Left cardiac atrium (tissue), 4 donors: ENCODE measurements at regions of chr13 and their contacts with region 1.

Region 1: DNA sequence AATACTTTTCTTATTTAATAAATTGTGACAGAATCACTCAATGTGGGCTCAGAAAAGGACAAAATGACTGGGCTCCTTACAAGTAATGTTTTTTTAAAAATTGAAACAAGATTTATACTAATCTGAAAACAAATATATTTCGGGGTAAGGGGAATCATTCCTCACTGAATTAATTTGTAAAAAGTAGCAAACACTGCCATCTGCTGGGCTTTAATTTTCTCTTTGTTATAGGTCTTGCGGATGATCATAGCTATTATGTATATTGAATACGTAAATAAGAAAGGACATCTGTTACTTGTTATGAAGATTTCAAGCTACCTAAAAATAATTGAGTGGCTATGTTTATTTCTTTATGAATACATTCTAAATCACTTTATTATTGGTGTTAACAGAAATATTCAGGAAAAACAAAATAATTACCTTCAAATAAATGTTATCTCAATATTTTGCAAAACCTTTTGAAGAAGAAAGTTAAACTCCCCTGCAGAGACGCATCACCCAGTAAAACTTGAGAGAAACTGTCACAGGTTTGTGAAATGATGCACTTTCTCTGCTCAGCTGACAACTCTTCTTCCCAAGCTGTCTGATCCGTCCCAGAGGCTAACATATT is 17.8 kb upstream of the ENOX1 start:
- DNase-seq: no peak
- ATAC-seq: peak; percentile 65 to 78

Region 2: GRCh38 chr13:42594970-42595571 is 1209.5 kb before region 1 on chr13:
- intact Hi-C with region 1: loop called in 1 of 2 experiments (anchors 5 kb)
- DNase-seq: peak; percentile 48
- ATAC-seq: peak; percentile 30 to 62

Region 3: GRCh38 chr13:42969558-42970172 is 834.9 kb before region 1 on chr13:
- intact Hi-C with region 1: loop called in 1 of 2 experiments (anchors 5 kb)
- DNase-seq: peak; percentile 85
- ATAC-seq: peak; percentile 84 to 90

Region 4: DNA sequence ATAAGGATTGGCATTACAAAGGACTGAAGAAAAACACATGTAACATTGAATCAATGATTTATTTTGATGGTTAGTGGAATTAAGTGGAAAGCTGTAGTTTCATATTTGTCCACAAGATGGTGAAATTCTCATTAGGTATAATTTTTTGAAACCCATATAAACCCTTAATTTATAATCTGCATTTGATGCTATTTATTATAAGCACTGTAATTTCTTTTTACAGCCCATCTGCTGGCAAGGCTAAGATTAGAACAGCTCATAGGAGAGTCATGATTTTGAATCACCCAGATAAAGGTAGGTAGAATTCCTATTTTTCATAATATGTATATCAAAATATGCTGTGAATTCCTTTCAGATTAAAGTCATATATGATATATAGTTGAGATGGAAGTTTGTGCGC is 719.0 kb before region 1 on chr13:
- intact Hi-C with region 1: loop called in 1 of 2 experiments (anchors 5 kb)
- DNase-seq: no peak
- ATAC-seq: no peak

Region 5: GRCh38 chr13:43303033-43303729 is 501.4 kb before region 1 on chr13:
- intact Hi-C with region 1: loop called in 1 of 2 experiments (anchors 5 kb)
- DNase-seq: peak; percentile 71
- ATAC-seq: peak; percentile 76 to 89